ENCODE measurements at regions of chr3 and their contacts with region 1.

Region 1: DNA sequence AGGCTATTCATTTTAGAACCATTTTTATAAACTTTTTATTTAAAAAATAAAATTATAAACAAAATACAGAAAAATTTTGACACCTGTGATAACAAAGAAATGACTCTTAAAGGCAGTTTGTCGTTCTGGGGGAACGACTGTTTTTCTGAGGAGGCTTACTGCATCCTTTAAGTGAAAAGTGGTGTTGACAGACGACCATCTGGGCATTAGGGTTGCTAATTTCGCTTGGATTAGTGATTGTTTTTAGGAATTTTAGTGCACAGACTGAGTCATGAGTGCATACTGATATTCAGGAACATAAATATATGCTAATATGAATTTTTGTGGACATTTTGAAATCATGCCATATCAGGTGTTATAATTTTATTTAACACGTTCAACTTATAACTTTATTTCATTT is 28.5 kb downstream of the OSTN start:
- DNase-seq: no peak
- ATAC-seq: no peak
- H3K4me3 ChIP-seq: no peak overlapping the region
- H3K27ac ChIP-seq: no peak overlapping the region
- H3K4me1 ChIP-seq: no peaks in the 10 kb centered on the region
- H3K27me3 ChIP-seq: no peaks in the 10 kb centered on the region
- CTCF ChIP-seq: no peak

Region 2: DNA sequence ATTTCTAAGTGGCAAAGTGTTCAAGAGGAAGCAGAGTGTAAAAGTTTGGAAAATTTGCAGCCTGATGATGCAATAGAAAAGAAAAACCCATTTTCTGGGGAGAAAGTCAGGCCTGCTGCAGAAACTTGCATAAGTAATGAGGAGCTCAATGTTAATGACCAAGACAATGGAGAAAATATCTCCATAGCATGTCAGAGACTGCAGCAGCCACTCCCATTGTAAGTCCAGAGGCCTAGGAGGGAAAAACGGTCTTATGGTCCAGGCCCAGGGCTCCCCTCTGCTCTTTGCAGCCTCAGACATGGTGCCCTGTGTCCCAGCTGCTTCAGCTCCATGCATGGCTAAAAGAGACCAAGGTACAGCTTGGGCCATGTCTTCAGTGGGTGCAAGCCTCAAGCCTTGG is 268.5 kb before region 1 on chr3:
- intact Hi-C with region 1: no loop called
- DNase-seq: no peak
- ATAC-seq: no peak
- H3K4me3 ChIP-seq: no peak overlapping the region
- H3K27ac ChIP-seq: no peak overlapping the region
- H3K4me1 ChIP-seq: no peaks in the 10 kb centered on the region
- H3K27me3 ChIP-seq: no peaks in the 10 kb centered on the region
- CTCF ChIP-seq: no peak

Region 3: DNA sequence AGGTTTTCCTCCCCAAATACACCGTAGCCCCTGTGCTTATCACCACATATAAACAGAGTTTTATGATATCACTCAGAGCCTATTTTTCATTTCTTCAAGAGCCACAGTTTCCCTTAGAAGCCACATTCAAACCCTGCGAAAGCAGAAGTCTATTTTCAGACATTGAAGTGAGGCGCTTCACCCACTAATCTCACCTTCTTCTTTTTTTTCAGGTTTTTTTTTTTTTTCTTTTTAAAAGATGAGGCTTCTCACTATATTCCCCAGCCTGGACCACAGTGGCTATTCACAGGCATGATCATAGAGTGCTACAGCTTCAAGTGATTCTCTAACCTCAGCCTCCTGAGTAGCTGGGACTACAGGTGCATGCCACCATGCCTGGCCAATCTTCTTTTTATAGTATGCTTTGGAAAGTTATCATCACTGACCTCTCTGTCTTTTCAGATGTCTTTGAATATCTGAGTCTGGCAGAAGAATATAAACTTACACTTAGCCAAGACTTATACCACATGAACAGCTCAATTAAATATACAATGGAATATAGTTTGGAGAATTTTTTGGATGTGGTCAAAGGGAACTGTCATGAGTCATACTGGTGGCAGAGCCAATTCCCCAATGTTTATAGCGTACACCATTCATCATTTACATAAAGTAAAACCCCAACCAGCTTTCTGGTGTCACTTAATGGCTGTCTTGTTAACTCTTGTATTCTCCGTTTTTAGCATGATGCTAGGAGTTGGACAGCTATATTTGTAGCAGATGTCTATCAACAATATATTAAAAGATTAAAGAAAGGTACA is 41.9 kb after region 1 on chr3:
- intact Hi-C with region 1: no loop called
- DNase-seq: no peak
- ATAC-seq: no peak
- H3K4me3 ChIP-seq: no peak overlapping the region
- H3K27ac ChIP-seq: no peak overlapping the region
- H3K4me1 ChIP-seq: peaks cover 0 to 5% (median 0%) of the 10 kb centered on the region in 9 donors
- H3K27me3 ChIP-seq: no peaks in the 10 kb centered on the region
- CTCF ChIP-seq: no peak

Region 4: DNA sequence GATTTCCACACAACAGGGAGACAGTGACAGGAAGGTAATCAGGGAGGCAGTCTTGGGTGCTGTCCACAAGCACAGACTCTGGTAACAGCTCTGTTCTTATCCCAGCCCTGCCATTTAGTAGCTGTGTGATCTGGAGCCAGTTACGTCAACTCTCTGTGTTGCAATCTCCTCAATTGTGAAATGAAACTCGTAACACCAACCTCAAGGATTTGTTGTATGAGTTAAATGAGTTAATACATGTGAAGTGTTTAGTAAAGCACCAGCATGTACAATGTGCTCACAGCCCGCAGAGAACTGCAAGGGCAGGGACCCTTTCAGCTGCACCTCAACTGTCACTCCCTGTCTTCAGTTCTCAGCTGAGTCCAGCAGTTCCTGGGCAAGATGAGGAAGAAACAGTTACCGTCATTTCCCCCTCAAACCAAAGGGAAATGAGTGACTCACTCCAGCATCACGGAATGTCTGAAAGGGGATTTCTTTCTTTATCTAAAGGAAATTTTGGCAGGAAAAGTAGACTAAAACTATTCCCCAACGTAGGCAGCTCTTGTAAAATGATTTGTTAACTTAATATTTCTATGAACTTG is 1730.0 kb after region 1 on chr3:
- intact Hi-C with region 1: loop called in 1 of 10 experiments (anchors 5 kb)
- DNase-seq: peak in 1 of 2 donors; percentile 64
- ATAC-seq: peak; percentile 79 to 98 (median 94)
- H3K4me3 ChIP-seq: peak overlapping the region in 5 of 10 donors; percentile 10 to 20 (median 15)
- H3K27ac ChIP-seq: peak overlapping the region in 8 of 10 donors; percentile 36 to 92 (median 76)
- H3K4me1 ChIP-seq: peaks cover 0 to 27% (median 6%) of the 10 kb centered on the region in 9 donors
- H3K27me3 ChIP-seq: no peaks in the 10 kb centered on the region
- CTCF ChIP-seq: no peak